PC-3 (cell line): ENCODE measurements at regions of chr5 and their contacts with region 1.

Region 1: GRCh38 chr5:6704361-6704851 is 8.8 kb upstream of the TENT4A start:
- DNase-seq: peak; percentile 95
- ATAC-seq: peak; percentile 93
- H3K4me3 ChIP-seq: peak overlapping the region; percentile 11; the same call in 1 of the 2 replicates
- H3K27ac ChIP-seq: peak overlapping the region; percentile 77
- H3K4me1 ChIP-seq: peaks cover 43% of the 10 kb centered on the region
- H3K27me3 ChIP-seq: no peaks in the 10 kb centered on the region
- CTCF ChIP-seq: no peak

Region 2: GRCh38 chr5:6604946-6605345 is 99.5 kb before region 1 on chr5:
- CTCF ChIA-PET with region 1: no interaction called
- POLR2A ChIA-PET with region 1: interaction called, 14 read pairs
- intact Hi-C with region 1: no loop called
- DNase-seq: no peak
- ATAC-seq: no peak
- H3K4me3 ChIP-seq: no peak overlapping the region
- H3K27ac ChIP-seq: no peak overlapping the region
- H3K4me1 ChIP-seq: no peaks in the 10 kb centered on the region
- H3K27me3 ChIP-seq: no peaks in the 10 kb centered on the region
- CTCF ChIP-seq: no peak